Body of pancreas (tissue), 4 donors: ENCODE measurements at regions of chr1 and their contacts with region 1.

Region 1: DNA sequence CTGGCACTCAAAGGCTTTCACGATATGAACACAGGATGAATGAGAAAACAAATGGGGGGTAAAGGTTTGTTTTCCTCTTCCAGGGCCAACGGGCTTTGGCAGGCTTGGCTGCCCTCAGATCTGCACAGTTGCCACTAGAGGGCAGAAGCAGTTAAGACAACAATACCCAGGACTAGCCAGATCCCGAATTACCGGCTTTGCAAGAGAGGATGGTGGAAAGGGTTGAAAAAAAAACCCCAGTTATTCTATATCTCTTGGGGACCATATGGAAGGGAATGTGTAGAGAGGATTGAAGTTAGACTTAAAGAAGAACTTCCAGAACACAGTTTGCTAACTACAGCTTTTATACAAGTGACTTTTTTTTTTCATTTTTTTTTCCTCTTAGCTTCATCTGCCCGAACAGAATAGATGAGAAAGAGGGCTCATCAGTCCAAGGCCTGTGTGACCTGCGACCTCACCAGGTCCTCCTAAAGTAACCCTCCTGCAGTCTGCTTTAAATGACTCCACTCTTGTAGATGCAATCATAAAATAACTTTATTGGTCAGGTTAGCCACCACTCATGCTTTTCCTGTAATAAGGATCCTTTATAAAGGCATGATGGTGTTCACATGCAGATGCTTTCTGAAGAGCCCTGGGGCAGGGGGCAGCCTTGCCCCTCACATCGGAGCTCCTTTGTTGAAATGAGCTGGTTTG is 10.7 kb downstream of the FMOD start:
- DNase-seq: peak; percentile 75 to 87 (median 83)
- ATAC-seq: peak; percentile 87
- H3K4me3 ChIP-seq: no peak overlapping the region
- H3K27ac ChIP-seq: peak overlapping the region in 3 of 4 donors; percentile 15 to 28 (median 24)
- H3K4me1 ChIP-seq: peaks cover 17% of the 10 kb centered on the region
- H3K27me3 ChIP-seq: no peaks in the 10 kb centered on the region
- CTCF ChIP-seq: peak; percentile 72 to 94 (median 89)
- POLR2A ChIP-seq: no peak

Region 2: GRCh38 chr1:203440771-203441170 is 100.5 kb after region 1 on chr1:
- intact Hi-C with region 1: loop called (anchors 5 kb)
- DNase-seq: peak; percentile 37 to 64 (median 60)
- ATAC-seq: peak; percentile 74
- H3K4me3 ChIP-seq: no peak overlapping the region
- H3K27ac ChIP-seq: no peak overlapping the region
- H3K4me1 ChIP-seq: no peaks in the 10 kb centered on the region
- H3K27me3 ChIP-seq: no peaks in the 10 kb centered on the region
- CTCF ChIP-seq: peak in 5 of 7 experiments; percentile 14 to 46 (median 46)
- POLR2A ChIP-seq: no peak